ENCODE measurements at regions of chr10 and their contacts with region 1.

Region 1: GRCh38 chr10:114779803-114780609 is 41.6 kb upstream of the FHIP2A start:
- DNase-seq: peak; percentile 90
- ATAC-seq: peak; percentile 90
- H3K4me3 ChIP-seq: no peak overlapping the region
- H3K27ac ChIP-seq: peak overlapping the region; percentile 98
- H3K4me1 ChIP-seq: peaks cover 60% of the 10 kb centered on the region
- H3K27me3 ChIP-seq: no peaks in the 10 kb centered on the region
- CTCF ChIP-seq: no peak

Region 2: DNA sequence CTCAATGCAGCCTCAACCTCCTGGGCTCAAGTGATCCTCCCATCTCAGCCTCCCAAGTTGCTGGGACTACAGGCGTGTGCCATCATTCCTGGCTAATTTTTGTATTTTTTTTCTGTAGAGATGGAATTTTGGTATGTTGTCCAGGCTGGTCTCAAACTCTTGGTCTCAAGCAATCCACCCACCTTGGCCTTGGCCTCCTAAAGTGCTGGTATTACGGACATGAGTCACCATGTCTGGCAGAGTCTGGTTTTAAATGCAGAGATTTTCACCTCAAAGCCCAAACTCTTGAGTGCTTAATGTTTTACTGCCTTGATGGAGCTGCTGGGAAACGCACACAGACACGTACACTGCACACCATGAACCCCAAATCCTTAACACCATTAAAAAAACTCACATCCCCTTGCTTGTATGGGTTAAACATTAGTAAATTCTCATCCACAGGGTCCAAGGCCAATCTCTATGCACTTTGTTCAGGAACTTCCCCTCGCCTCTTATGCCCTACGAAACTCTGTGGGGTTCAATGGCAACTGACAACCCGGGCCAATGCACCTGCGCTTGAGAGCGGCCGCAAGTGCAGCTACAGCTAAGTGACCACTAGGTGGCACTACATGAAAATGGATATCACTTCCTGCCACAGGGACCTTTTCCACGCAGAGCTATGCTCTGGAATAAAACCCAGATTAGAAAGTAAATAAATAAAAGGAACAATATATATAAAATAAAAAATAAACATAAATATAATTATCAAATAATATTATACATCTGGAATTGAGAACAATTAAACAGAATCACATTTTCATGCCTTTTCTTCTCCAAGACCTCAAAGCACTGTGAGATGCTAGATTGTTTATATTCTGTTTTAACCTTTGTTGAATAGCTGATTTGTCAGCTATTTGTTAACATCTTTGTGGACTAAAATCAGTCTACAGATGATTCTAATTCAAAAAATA is 308.8 kb before region 1 on chr10:
- CTCF ChIA-PET with region 1: no interaction called
- POLR2A ChIA-PET with region 1: no interaction called
- in situ Hi-C with region 1: no loop called
- intact Hi-C with region 1: loop called (anchors 5 kb)
- DNase-seq: peak; percentile 59
- ATAC-seq: peak; percentile 89
- H3K4me3 ChIP-seq: no peak overlapping the region
- H3K27ac ChIP-seq: peak overlapping the region; percentile 36; the same call in 1 of the 2 replicates
- H3K4me1 ChIP-seq: peaks cover 21% of the 10 kb centered on the region
- H3K27me3 ChIP-seq: no peaks in the 10 kb centered on the region
- CTCF ChIP-seq: peak; percentile 91

Region 3: GRCh38 chr10:114550756-114551635 is 229.0 kb before region 1 on chr10:
- CTCF ChIA-PET with region 1: no interaction called
- POLR2A ChIA-PET with region 1: no interaction called
- in situ Hi-C with region 1: no loop called
- intact Hi-C with region 1: loop called (anchors 2 kb)
- DNase-seq: no peak
- ATAC-seq: peak; percentile 47
- H3K4me3 ChIP-seq: no peak overlapping the region
- H3K27ac ChIP-seq: peak overlapping the region; percentile 81
- H3K4me1 ChIP-seq: peaks cover 34% of the 10 kb centered on the region
- H3K27me3 ChIP-seq: no peaks in the 10 kb centered on the region
- CTCF ChIP-seq: peak; percentile 62

Region 4: GRCh38 chr10:114638821-114639625 is 141.0 kb before region 1 on chr10:
- CTCF ChIA-PET with region 1: no interaction called
- POLR2A ChIA-PET with region 1: no interaction called
- in situ Hi-C with region 1: no loop called
- intact Hi-C with region 1: loop called (anchors 5 kb)
- DNase-seq: no peak
- ATAC-seq: peak; percentile 54
- H3K4me3 ChIP-seq: no peak overlapping the region
- H3K27ac ChIP-seq: peak overlapping the region; percentile 96
- H3K4me1 ChIP-seq: peaks cover 89% of the 10 kb centered on the region
- H3K27me3 ChIP-seq: no peaks in the 10 kb centered on the region
- CTCF ChIP-seq: no peak

Region 5: DNA sequence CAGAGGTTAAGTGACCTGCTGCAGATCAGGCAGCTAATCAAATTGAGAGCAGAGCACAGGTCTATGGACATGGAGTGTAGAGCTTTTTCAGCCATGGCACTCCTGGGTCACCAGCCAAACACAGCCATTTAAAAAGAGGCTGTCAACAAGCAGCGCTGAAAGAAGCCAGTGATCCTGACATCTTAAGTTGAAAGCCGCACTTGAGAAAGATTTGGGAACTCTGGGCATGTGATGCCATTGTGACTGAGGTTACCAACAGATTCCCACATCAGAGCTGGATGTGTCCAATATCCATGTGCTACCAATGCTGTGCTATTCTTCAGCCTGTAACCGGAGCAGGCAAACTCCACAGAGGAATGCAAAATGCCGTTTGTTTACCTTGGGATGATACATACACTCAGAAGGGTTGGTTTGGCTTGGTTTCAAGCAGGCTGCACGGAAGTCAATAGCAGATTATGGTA is 65.7 kb before region 1 on chr10:
- CTCF ChIA-PET with region 1: no interaction called
- POLR2A ChIA-PET with region 1: interaction called, 4 read pairs
- in situ Hi-C with region 1: no loop called
- intact Hi-C with region 1: loop called (anchors 5 kb)
- DNase-seq: peak; percentile 93
- ATAC-seq: peak; percentile 86
- H3K4me3 ChIP-seq: peak overlapping the region in 1 of 2 experiments; percentile 38; a peak in 2 of 4 replicates
- H3K27ac ChIP-seq: peak overlapping the region; percentile 100
- H3K4me1 ChIP-seq: peaks cover 94% of the 10 kb centered on the region
- H3K27me3 ChIP-seq: no peaks in the 10 kb centered on the region
- CTCF ChIP-seq: no peak

Region 6: GRCh38 chr10:114995468-114996247 is 215.7 kb after region 1 on chr10:
- CTCF ChIA-PET with region 1: no interaction called
- POLR2A ChIA-PET with region 1: no interaction called
- in situ Hi-C with region 1: no loop called
- intact Hi-C with region 1: no loop called
- DNase-seq: no peak
- ATAC-seq: no peak
- H3K4me3 ChIP-seq: no peak overlapping the region
- H3K27ac ChIP-seq: no peak overlapping the region
- H3K4me1 ChIP-seq: no peaks in the 10 kb centered on the region
- H3K27me3 ChIP-seq: no peaks in the 10 kb centered on the region
- CTCF ChIP-seq: no peak